Left cardiac atrium (tissue), 4 donors: ENCODE measurements at regions of chr5 and their contacts with region 1.

Region 1: GRCh38 chr5:172188033-172188892 is at the start of gene STK10:
- DNase-seq: peak; percentile 95
- ATAC-seq: peak; percentile 95 to 96
- total RNA-seq, gene STK10: 15.4 to 18.1 TPM

Region 2: GRCh38 chr5:171783051-171783450 is 405.2 kb before region 1 on chr5:
- intact Hi-C with region 1: no loop called
- DNase-seq: no peak
- ATAC-seq: peak in 1 of 2 donors; percentile 63

Region 3: DNA sequence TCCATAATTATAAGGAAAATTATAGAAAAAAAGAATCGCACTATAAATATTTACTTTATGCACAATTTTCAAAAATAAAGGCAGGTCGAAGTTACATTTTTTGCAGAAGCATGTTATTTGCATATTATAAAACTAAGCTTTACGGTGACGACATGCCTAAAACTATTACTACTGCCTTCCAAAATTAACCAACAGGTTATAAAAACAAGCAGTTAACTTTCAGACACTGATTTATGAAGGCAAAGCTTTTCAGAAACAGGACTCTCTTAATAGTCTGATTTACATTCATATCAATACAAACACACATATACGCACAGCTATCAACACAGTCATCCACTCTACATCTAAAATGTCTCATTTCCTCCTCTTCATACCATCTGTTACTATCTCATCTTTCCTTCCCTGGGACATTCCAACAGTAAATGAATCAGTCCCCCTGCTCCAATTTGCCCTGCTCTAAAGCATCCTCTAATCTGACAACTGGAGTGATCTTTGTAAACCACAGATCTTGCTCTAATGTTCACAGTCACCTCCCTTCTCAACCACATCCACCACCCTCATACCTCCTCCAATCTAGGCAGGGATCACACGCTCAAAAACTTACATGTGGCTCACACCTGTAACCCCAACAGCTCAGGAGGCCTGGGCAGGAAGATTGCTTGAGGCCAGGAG is 203.4 kb before region 1 on chr5:
- intact Hi-C with region 1: no loop called
- DNase-seq: no peak
- ATAC-seq: peak in 1 of 2 donors; percentile 59

Region 4: GRCh38 chr5:172156541-172156994 is 31.7 kb before region 1 on chr5:
- intact Hi-C with region 1: no loop called
- DNase-seq: peak; percentile 85
- ATAC-seq: peak; percentile 55 to 58

Region 5: DNA sequence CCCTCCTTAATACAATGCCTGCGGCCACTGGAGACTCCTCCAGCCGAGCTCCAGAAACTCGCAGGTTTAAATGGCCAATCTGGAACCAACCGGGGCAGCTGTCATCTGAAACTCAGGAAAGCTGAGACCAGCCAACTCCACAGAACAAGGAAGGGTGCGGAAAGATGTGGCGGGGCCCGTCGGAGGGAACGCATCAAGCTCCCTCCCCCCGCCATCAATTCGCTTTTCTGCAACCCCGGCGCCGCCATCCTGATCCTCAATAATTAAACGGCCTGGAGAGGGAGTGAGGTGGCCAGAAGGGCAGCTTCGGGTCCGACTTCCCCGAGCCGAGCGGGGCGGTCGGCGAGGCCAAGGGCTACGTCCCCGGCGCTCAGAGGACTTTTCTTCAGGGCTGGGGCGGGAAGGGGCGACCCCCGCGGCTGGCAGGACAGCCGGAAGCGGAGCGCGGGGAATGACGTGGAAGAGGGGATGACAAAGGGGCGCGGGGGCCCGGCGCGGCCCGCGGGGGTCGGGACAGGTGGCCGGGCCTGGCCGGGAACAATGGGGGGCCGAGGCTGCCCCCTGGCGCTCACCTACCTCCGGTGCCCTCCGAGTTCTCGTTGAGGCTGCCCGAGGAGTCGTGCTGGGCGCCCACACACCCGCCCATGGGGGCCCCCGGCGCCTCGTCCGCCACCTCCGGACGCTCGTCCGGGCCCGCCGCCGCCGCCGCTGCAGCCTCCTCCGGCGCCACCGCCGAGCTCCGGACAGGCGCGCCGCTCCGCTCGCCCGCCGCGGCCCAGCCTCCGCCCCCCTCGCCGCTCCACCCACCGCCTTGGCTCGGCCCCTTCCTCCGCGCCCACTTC is 95.0 kb after region 1 on chr5 and contains the start of gene UBTD2:
- intact Hi-C with region 1: loop called in 1 of 2 experiments (anchors 5 kb)
- DNase-seq: peak; percentile 86
- ATAC-seq: peak; percentile 90 to 93
- total RNA-seq, gene UBTD2: 9.7 to 10.9 TPM

Region 6: GRCh38 chr5:172616730-172617129 is 428.5 kb after region 1 on chr5:
- intact Hi-C with region 1: no loop called
- DNase-seq: peak; percentile 83
- ATAC-seq: peak; percentile 94 to 96